ENCODE measurements at regions of chr16 and their contacts with region 1.

Region 1: DNA sequence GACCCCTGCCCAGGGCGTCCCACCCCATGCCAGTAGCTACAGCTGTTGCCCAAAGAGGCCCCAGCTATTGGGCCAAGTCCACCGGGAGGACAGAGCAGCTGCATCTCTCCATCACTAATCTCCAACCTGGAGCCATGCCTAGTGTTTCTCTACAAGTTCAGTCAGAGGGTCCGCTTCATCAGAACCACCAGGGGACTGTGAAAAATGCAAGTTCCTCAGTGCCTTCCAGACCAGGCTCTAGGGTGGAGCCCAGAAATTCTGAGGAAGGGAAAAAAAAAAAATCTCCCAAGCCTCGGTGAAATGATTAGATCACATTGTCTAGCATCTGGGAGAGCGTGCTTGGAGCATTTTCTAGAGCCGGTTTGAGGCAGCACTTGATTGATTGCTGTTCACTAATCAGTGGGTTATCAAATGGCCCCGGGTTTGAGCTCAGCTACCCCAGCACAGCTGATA is 22.4 kb upstream of the HERPUD1 start:
- DNase-seq: no peak
- ATAC-seq: no peak
- H3K4me3 ChIP-seq: no peak overlapping the region
- H3K4me3 Mint-ChIP-seq: no peak overlapping the region
- H3K27ac ChIP-seq: no peak overlapping the region
- H3K27ac Mint-ChIP-seq: no peak overlapping the region
- H3K4me1 ChIP-seq: peaks cover 5 to 16% of the 10 kb centered on the region in 2 experiments
- H3K4me1 Mint-ChIP-seq: peaks cover 10 to 24% (median 19%) of the 10 kb centered on the region in 3 donors
- H3K27me3 ChIP-seq: peaks cover 0 to 14% of the 10 kb centered on the region in 2 experiments
- H3K27me3 Mint-ChIP-seq: peaks cover 0 to 6% of the 10 kb centered on the region in 2 donors

Region 2: GRCh38 chr16:56923446-56924091 is 14.0 kb after region 1 on chr16:
- CTCF ChIA-PET with region 1: interaction called in 1 of 2 experiments, 3 read pairs
- POLR2A ChIA-PET with region 1: interaction called in 1 of 2 experiments, 10 read pairs
- DNase-seq: no peak
- ATAC-seq: no peak
- H3K4me3 ChIP-seq: no peak overlapping the region
- H3K4me3 Mint-ChIP-seq: no peak overlapping the region
- H3K27ac ChIP-seq: no peak overlapping the region
- H3K27ac Mint-ChIP-seq: no peak overlapping the region
- H3K4me1 ChIP-seq: peaks cover 0 to 5% of the 10 kb centered on the region in 2 experiments
- H3K4me1 Mint-ChIP-seq: peaks cover 0 to 14% (median 5%) of the 10 kb centered on the region in 3 donors
- H3K27me3 ChIP-seq: no peaks in the 10 kb centered on the region
- H3K27me3 Mint-ChIP-seq: no peaks in the 10 kb centered on the region

Region 3: GRCh38 chr16:56964243-56965148 is 54.9 kb after region 1 on chr16:
- CTCF ChIA-PET with region 1: no interaction called
- POLR2A ChIA-PET with region 1: no interaction called
- DNase-seq: peak; percentile 84 to 98 (median 94)
- ATAC-seq: peak; percentile 86 to 97 (median 92)
- H3K4me3 ChIP-seq: peak overlapping the region in 1 of 2 donors; percentile 26
- H3K4me3 Mint-ChIP-seq: no peak overlapping the region
- H3K27ac ChIP-seq: peak overlapping the region; percentile 11
- H3K27ac Mint-ChIP-seq: peak overlapping the region; percentile 57 to 68
- H3K4me1 ChIP-seq: peaks cover 9 to 17% of the 10 kb centered on the region in 2 experiments
- H3K4me1 Mint-ChIP-seq: peaks cover 21 to 22% (median 22%) of the 10 kb centered on the region in 3 donors
- H3K27me3 ChIP-seq: peaks cover 0 to under 1% of the 10 kb centered on the region in 2 experiments
- H3K27me3 Mint-ChIP-seq: no peaks in the 10 kb centered on the region